Activated naive CD4-positive, alpha-beta T cell treated with anti-CD3 and anti-CD28 coated beads for 36 hours (primary cell): ENCODE measurements at regions of chr7 and their contacts with region 1.

Region 1: DNA sequence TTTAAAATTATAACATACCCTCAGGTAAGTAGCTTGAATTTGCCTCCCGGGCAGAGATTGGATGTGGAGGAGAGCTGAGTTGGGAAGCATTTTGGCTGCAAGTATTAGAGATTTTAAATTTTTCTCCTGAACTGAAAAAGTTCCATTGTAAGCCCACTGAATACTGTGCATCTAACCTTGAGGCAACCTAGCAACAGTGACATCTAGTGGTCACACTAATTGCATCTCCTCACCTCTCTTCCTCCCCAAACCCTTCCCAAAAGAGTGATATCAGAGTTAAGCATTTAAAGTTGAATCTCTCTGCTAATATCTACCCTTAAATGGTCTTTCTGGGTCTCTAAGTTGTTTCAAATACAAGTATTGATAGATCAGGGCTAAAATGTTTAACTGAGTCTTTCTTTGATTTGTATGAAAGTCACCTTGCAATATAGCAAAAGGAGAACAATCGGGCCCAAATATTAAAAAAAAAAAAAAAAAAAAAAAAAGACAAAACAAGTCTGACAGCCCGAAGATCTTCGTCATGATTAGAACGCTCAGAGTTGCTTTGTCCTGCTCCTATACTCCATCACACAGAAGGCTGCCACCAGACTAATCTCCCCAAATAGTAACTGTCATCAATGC is 40.4 kb upstream of the DLX5 start:
- DNase-seq: peak; percentile 11
- H3K4me3 Mint-ChIP-seq: no peak overlapping the region
- H3K27ac Mint-ChIP-seq: no peak overlapping the region
- H3K4me1 Mint-ChIP-seq: no peaks in the 10 kb centered on the region
- H3K27me3 Mint-ChIP-seq: peaks cover 8% of the 10 kb centered on the region

Region 2: DNA sequence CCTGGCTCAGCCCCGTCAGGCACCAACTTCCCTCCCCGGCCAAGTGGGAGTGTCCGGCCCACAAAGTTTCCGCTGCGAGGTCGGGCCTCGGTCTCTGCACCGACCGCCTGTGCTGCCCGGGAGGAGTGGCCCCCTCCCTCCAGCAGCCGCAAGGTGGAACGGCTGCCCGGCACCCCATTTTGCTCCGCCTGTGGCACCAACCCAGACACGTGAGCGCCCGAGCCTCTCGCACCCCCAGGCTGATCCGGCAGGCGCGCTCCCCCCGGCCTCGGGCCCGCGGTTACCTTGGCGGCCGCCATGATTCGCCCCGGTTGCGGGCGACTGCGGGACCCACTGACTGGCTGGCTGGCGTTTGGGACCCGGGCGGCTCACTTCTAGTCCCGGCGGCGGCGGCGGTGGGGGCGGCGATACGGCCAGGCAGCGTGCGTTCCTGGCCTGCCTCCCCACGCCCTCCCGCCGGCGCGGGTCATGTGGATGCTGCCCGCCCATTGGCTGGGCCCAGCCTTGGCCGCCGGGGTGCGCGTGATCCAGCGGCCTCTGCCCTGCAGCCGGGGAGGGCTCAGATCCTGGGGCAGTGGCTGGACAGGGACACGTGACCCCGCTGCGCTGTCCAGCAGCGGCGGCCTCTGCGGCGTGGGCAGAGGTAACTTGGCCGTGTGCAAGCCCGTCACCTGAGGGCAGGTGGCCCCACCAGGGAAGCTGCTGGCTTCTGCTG is 743.3 kb before region 1 on chr7 and contains the start of gene SLC25A13:
- CTCF ChIA-PET with region 1: no interaction called
- intact Hi-C with region 1: no loop called
- DNase-seq: peak; percentile 53
- H3K4me3 Mint-ChIP-seq: peak within 1 kb of the TSS; percentile 83
- H3K27ac Mint-ChIP-seq: peak within 1 kb of the TSS; percentile 89
- H3K4me1 Mint-ChIP-seq: peaks cover 34% of the 10 kb centered on the region
- H3K27me3 Mint-ChIP-seq: peaks cover 6% of the 10 kb centered on the region
- total RNA-seq, gene SLC25A13: 4.0 to 5.7 TPM

Region 3: GRCh38 chr7:96786261-96786997 is 278.6 kb before region 1 on chr7:
- CTCF ChIA-PET with region 1: no interaction called
- intact Hi-C with region 1: no loop called
- DNase-seq: no peak
- H3K4me3 Mint-ChIP-seq: no peak overlapping the region
- H3K27ac Mint-ChIP-seq: no peak overlapping the region
- H3K4me1 Mint-ChIP-seq: no peaks in the 10 kb centered on the region
- H3K27me3 Mint-ChIP-seq: no peaks in the 10 kb centered on the region

Region 4: GRCh38 chr7:96949766-96950165 is 115.3 kb before region 1 on chr7:
- CTCF ChIA-PET with region 1: no interaction called
- intact Hi-C with region 1: no loop called
- DNase-seq: no peak
- H3K4me3 Mint-ChIP-seq: no peak overlapping the region
- H3K27ac Mint-ChIP-seq: no peak overlapping the region
- H3K4me1 Mint-ChIP-seq: no peaks in the 10 kb centered on the region
- H3K27me3 Mint-ChIP-seq: peaks cover 29% of the 10 kb centered on the region

Region 5: DNA sequence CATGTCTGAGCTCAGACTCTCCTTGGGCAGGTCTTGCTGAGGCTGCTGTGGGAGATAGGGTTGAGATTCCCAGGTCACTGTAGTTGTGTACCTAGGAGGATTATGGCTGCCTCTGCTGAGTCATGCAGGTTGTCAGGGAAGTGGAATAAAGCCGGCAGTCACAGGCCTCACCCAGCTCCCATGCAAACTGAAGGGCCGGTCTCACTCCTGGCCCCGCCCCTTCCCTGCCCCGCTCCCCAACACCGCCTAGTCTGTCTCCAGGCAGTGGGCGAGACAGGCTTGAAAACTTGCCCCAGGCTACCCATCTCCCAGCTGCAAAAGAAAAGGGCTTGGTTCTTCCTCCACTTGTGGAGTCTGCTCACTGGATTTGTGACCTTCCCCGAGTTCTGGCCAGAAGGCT is 10.9 kb after region 1 on chr7:
- CTCF ChIA-PET with region 1: interaction called, 13 read pairs
- intact Hi-C with region 1: no loop called
- DNase-seq: no peak
- H3K4me3 Mint-ChIP-seq: no peak overlapping the region
- H3K27ac Mint-ChIP-seq: no peak overlapping the region
- H3K4me1 Mint-ChIP-seq: no peaks in the 10 kb centered on the region
- H3K27me3 Mint-ChIP-seq: peaks cover 46% of the 10 kb centered on the region